Common myeloid progenitor, CD34-positive (primary cell): ENCODE measurements at regions of chr2 and their contacts with region 1.

Region 1: DNA sequence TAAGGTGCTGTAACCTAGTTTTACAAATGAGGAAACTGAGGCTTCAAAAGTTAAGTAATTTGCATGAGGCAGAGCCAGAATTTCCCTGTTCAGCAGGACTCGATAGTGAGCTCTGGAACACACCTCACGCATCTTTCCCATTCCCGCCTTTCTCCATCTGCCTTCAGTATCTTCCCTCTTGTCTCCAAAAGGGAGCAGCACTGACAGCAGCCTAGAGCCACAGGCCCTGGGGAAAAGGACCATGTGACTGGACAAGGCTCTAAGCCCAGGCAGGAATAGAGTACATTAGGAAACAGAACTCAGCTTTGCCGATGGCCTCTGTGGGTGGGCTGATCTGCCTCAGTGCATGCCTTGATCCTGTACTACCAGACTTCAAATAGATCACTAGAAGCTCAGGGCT is 21.5 kb downstream of the GPR155 start:
- DNase-seq: no peak
- H3K4me3 ChIP-seq: no peak overlapping the region
- H3K27ac ChIP-seq: no peak overlapping the region
- H3K4me1 ChIP-seq: no peaks in the 10 kb centered on the region
- H3K27me3 ChIP-seq: no peaks in the 10 kb centered on the region

Region 2: DNA sequence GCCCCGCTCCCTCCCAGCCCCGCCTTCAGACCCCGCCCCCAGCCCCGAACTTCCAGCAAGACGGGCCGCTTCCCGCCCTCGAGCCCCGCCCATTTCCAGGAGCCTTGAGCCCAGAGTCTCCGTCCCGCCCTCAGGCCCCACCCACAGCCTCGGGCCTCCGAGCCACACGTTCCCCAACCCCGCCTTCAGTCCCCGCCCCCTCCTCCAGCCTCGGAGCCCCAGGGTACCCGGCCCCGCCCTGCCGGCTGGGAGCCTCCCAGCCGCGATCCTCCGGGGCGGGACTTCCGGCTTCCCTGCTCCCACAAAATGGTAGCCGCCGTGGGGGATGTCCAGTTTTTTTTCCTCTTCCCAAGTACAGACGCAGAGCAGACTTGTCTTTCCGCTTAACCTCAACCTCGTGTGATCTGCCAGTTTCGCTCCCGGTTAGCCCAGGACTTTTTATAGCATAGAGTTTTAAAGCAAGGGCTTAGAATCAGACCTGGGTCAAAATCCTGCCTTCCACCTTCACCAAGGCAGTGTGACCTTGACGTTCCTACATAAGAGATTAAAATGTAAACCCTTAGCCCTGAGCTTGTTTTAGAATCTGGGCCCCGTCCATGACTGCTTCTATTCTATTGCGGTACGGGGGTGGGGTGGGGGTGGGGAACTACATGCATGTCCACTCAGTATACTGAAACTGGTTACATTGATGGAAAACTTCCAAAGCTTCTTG is 21.9 kb after region 1 on chr2:
- CTCF ChIA-PET with region 1: interaction called, 28 read pairs
- POLR2A ChIA-PET with region 1: interaction called, 4 read pairs
- DNase-seq: peak; percentile 97 to 98 (median 97)
- H3K4me3 ChIP-seq: peak overlapping the region; percentile 43 to 94 (median 82)
- H3K27ac ChIP-seq: peak overlapping the region; percentile 46 to 78
- H3K4me1 ChIP-seq: peaks cover 2 to 18% (median 13%) of the 10 kb centered on the region in 4 experiments
- H3K27me3 ChIP-seq: no peaks in the 10 kb centered on the region

Region 3: DNA sequence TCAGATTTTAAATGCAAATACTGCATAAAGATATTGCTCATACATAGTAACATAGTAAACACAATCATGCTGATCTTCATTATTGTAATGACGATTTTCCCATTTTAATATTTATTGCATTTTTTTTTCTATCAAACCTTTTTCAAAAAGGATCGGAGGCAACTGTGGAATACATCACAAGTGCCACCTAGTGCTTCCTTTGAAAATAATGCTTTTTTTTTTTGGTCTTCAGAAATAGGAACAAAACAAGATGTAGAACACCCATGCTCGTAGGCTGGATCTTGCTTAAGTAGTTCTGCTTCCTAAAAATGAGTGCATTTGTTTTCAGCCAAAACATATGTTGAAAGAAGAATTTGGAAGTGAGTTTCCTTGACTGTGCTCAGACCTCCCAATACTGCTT is 57.2 kb after region 1 on chr2:
- CTCF ChIA-PET with region 1: interaction called, 21 read pairs
- POLR2A ChIA-PET with region 1: no interaction called
- DNase-seq: peak; percentile 31 to 63 (median 57)
- H3K4me3 ChIP-seq: no peak overlapping the region
- H3K27ac ChIP-seq: no peak overlapping the region
- H3K4me1 ChIP-seq: peaks cover 0 to 5% (median 2%) of the 10 kb centered on the region in 4 experiments
- H3K27me3 ChIP-seq: peaks cover 0 to 2% (median 0%) of the 10 kb centered on the region in 5 experiments

Region 4: GRCh38 chr2:174546581-174547506 is 81.5 kb after region 1 on chr2:
- CTCF ChIA-PET with region 1: interaction called, 74 read pairs
- POLR2A ChIA-PET with region 1: interaction called, 3 read pairs
- DNase-seq: peak; percentile 25 to 67 (median 57)
- H3K4me3 ChIP-seq: no peak overlapping the region
- H3K27ac ChIP-seq: peak overlapping the region in 1 of 2 experiments; percentile 32
- H3K4me1 ChIP-seq: no peaks in the 10 kb centered on the region
- H3K27me3 ChIP-seq: no peaks in the 10 kb centered on the region

Region 5: GRCh38 chr2:174688079-174688478 is 222.8 kb after region 1 on chr2:
- CTCF ChIA-PET with region 1: interaction called, 14 read pairs
- POLR2A ChIA-PET with region 1: no interaction called
- DNase-seq: peak; percentile 45 to 73 (median 72)
- H3K4me3 ChIP-seq: no peak overlapping the region
- H3K27ac ChIP-seq: no peak overlapping the region
- H3K4me1 ChIP-seq: peaks cover 0 to 7% (median 3%) of the 10 kb centered on the region in 4 experiments
- H3K27me3 ChIP-seq: peaks cover 0 to 4% (median 0%) of the 10 kb centered on the region in 5 experiments